Heart left ventricle (tissue), 16 donors: ENCODE measurements at regions of chr16 and their contacts with region 1.

Region 1: GRCh38 chr16:75471723-75472633 is 7.5 kb upstream of the TMEM170A start:
- DNase-seq: peak in 4 of 5 donors; percentile 46 to 56 (median 52)
- ATAC-seq: peak; percentile 87 to 98 (median 94)
- H3K4me3 ChIP-seq: no peak overlapping the region
- H3K27ac ChIP-seq: no peak overlapping the region
- H3K4me1 ChIP-seq: no peaks in the 10 kb centered on the region
- H3K27me3 ChIP-seq: no peaks in the 10 kb centered on the region
- CTCF ChIP-seq: peak; percentile 57 to 84 (median 74)
- POLR2A ChIP-seq: no peak

Region 2: DNA sequence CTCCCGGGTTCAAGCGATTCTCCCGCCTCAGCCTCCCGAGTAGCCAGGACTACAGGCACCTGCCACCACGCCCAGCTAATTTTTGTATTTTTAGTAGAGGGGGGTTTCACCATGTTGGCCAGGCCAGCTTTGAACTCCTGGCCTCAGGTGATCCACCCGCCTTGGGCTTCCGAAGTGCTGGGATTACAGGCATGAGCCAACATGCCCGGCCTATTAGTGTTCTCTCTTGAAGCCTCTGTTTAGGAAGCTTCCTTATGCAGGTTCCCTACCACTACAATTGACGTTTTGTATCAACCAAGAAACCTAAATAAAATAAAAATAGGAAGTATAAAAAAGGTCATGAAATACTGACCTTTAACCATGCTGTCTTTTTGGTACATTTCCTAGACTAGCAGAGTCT is 47.9 kb after region 1 on chr16:
- intact Hi-C with region 1: loop called (anchors 1 to 5 kb)
- DNase-seq: no peak
- ATAC-seq: no peak
- H3K4me3 ChIP-seq: no peak overlapping the region
- H3K27ac ChIP-seq: no peak overlapping the region
- H3K4me1 ChIP-seq: peaks cover 0 to 10% (median 6%) of the 10 kb centered on the region in 12 donors
- H3K27me3 ChIP-seq: no peaks in the 10 kb centered on the region
- CTCF ChIP-seq: no peak
- POLR2A ChIP-seq: no peak

Region 3: DNA sequence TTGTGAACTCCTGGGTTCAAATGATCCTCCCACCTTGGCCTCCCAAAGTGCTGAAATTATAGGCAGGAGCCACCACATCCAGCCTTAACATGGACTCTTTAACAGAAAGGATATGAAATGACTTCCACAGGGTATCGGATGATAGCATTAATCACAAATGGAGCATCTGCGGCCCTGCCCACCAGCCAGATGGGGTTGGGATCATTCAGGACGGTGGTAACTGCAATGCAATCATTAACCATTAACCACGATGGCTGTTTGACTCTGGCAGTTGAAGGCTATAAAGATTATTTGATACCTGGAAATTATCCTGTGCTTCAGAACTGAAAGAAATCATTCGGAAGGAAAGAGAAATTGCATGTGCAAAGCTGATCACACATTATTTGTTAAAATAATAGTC is 69.3 kb after region 1 on chr16:
- intact Hi-C with region 1: loop called in 1 of 10 experiments (anchors 10 kb)
- DNase-seq: no peak
- ATAC-seq: no peak
- H3K4me3 ChIP-seq: no peak overlapping the region
- H3K27ac ChIP-seq: no peak overlapping the region
- H3K4me1 ChIP-seq: peaks cover 0 to 8% (median 1%) of the 10 kb centered on the region in 12 donors
- H3K27me3 ChIP-seq: no peaks in the 10 kb centered on the region
- CTCF ChIP-seq: no peak
- POLR2A ChIP-seq: no peak

Region 4: DNA sequence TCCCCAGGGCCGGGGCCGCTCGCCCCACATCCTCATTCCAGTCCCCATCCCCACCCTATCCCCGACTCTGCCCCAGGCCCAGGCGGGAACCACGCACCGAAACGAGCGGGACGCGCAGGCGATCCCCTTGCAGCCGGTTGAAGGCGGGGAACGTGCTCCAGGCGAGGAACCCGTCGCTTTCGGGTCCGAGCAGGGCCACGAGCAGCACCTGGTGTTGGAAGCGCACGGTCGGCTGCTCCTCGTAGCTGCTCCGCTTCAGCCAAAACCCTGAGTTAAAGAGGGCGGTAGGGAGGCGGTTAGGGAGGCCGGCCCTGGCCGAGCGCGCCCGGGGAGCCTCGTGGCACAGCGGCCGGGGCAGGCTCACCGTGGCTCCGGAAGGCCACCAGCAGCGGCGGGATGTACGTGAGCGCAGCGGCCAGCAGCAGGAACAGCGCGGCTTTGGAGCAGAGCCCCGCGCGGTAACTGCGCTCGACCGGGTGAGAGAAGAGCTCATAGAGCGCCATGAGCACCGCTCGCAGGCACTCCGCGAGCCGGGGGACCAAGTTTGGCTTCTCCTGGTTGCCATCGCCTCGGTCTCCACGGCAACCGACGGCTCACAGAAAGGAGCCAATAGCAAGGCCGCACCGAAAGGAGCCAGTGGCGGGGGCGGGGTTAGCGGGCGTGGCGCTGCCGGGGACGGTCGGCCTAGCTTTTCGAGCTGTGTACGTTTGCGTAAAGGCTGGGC is 83.9 kb after region 1 on chr16 and contains the start of gene TMEM231:
- intact Hi-C with region 1: loop called in 3 of 10 experiments (anchors 5 to 10 kb)
- DNase-seq: peak; percentile 98 to 99 (median 99)
- ATAC-seq: peak; percentile 92 to 97 (median 96)
- H3K4me3 ChIP-seq: peak within 1 kb of the TSS; percentile 50 to 87 (median 76)
- H3K27ac ChIP-seq: peak within 1 kb of the TSS; percentile 64 to 89 (median 78)
- H3K4me1 ChIP-seq: peaks cover 0 to 39% (median 16%) of the 10 kb centered on the region in 12 donors
- H3K27me3 ChIP-seq: no peaks in the 10 kb centered on the region
- CTCF ChIP-seq: peak in 1 of 12 donors; percentile 9
- POLR2A ChIP-seq: peak in 1 of 2 donors; percentile 48
- total RNA-seq, gene TMEM231: 4.4 to 9.1 (median 7.1) TPM

Region 5: GRCh38 chr16:75614066-75614897 is 142.3 kb after region 1 on chr16:
- intact Hi-C with region 1: loop called in 2 of 10 experiments (anchors 5 to 10 kb)
- DNase-seq: no peak
- ATAC-seq: no peak
- H3K4me3 ChIP-seq: no peak overlapping the region
- H3K27ac ChIP-seq: no peak overlapping the region
- H3K4me1 ChIP-seq: no peaks in the 10 kb centered on the region
- H3K27me3 ChIP-seq: no peaks in the 10 kb centered on the region
- CTCF ChIP-seq: no peak
- POLR2A ChIP-seq: no peak

Region 6: GRCh38 chr16:75758215-75758614 is 286.2 kb after region 1 on chr16:
- intact Hi-C with region 1: loop called in 6 of 10 experiments (anchors 5 to 10 kb)
- DNase-seq: no peak
- ATAC-seq: no peak
- H3K4me3 ChIP-seq: no peak overlapping the region
- H3K27ac ChIP-seq: no peak overlapping the region
- H3K4me1 ChIP-seq: peaks cover 0 to 3% (median 0%) of the 10 kb centered on the region in 12 donors
- H3K27me3 ChIP-seq: no peaks in the 10 kb centered on the region
- CTCF ChIP-seq: no peak
- POLR2A ChIP-seq: no peak